ENCODE measurements at regions of chr2 and their contacts with region 1.

Region 1: DNA sequence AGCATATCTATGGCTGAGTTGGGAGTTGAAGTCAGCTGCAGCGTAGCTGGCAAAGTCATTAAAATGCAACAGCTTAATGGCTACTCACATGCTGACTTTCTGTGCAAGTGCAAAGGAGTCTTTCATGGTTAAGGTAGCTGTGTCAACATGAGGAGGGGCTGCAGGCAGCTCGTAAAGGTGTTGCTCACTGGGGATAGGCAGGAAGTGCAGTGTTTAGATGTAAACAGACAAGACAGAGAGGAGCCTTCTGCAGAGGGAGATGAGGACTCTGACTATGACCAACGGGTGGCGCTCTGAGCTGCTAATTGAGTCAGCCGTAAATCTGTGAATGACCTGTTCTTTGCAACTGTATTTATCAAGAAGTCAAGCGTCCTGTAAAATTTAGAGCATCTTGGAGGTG is 22.3 kb upstream of the CAVIN2 start:
- DNase-seq: peak; percentile 18 to 79 (median 40)
- ATAC-seq: peak; percentile 92
- H3K4me3 ChIP-seq: no peak overlapping the region
- H3K27ac ChIP-seq: 0 out of 3 replicates have a peak overlapping the region, but pooled peaks have one; percentile 3
- H3K4me1 ChIP-seq: peaks cover 5 to 28% of the 10 kb centered on the region in 2 experiments; a peak in 3 of 5 replicates
- H3K27me3 ChIP-seq: no peaks in the 10 kb centered on the region
- CTCF ChIP-seq: peak; percentile 64 to 73 (median 69)
- EP300 ChIP-seq: no peak
- POLR2A ChIP-seq: no peak
- RAD21 ChIP-seq: peak; percentile 80 to 84

Region 2: GRCh38 chr2:191811807-191812602 is 57.2 kb before region 1 on chr2:
- CTCF ChIA-PET with region 1: no interaction called
- POLR2A ChIA-PET with region 1: no interaction called
- in situ Hi-C with region 1: no loop called
- intact Hi-C with region 1: loop called (anchors 2 kb)
- DNase-seq: peak; percentile 31 to 70 (median 43)
- ATAC-seq: peak; percentile 94
- H3K4me3 ChIP-seq: no peak overlapping the region
- H3K27ac ChIP-seq: no peak overlapping the region
- H3K4me1 ChIP-seq: no peaks in the 10 kb centered on the region; a peak in 2 of 5 replicates
- H3K27me3 ChIP-seq: no peaks in the 10 kb centered on the region
- CTCF ChIP-seq: peak; percentile 65 to 82 (median 70)
- EP300 ChIP-seq: no peak
- POLR2A ChIP-seq: no peak
- RAD21 ChIP-seq: peak; percentile 89 to 92

Region 3: GRCh38 chr2:191824398-191824797 is 44.8 kb before region 1 on chr2:
- CTCF ChIA-PET with region 1: no interaction called
- POLR2A ChIA-PET with region 1: no interaction called
- in situ Hi-C with region 1: no loop called
- intact Hi-C with region 1: no loop called
- DNase-seq: no peak
- ATAC-seq: 0 out of 3 replicates have a peak, but pooled peaks have one; percentile 15
- H3K4me3 ChIP-seq: no peak overlapping the region
- H3K27ac ChIP-seq: no peak overlapping the region
- H3K4me1 ChIP-seq: no peaks in the 10 kb centered on the region; a peak in 1 of 5 replicates
- H3K27me3 ChIP-seq: no peaks in the 10 kb centered on the region
- CTCF ChIP-seq: no peak
- EP300 ChIP-seq: no peak
- POLR2A ChIP-seq: no peak
- RAD21 ChIP-seq: no peak

Region 4: GRCh38 chr2:191836853-191837769 is 32.1 kb before region 1 on chr2:
- CTCF ChIA-PET with region 1: no interaction called
- POLR2A ChIA-PET with region 1: no interaction called
- in situ Hi-C with region 1: no loop called
- intact Hi-C with region 1: loop called (anchors 2 kb)
- DNase-seq: peak; percentile 59 to 89 (median 67)
- ATAC-seq: peak; percentile 73
- H3K4me3 ChIP-seq: peak overlapping the region; percentile 50
- H3K27ac ChIP-seq: peak overlapping the region; percentile 95
- H3K4me1 ChIP-seq: peaks cover 8 to 49% of the 10 kb centered on the region in 2 experiments
- H3K27me3 ChIP-seq: no peaks in the 10 kb centered on the region
- CTCF ChIP-seq: no peak
- EP300 ChIP-seq: peak; percentile 98
- POLR2A ChIP-seq: 0 out of 2 replicates have a peak, but pooled peaks have one; percentile 38
- RAD21 ChIP-seq: no peak

Region 5: DNA sequence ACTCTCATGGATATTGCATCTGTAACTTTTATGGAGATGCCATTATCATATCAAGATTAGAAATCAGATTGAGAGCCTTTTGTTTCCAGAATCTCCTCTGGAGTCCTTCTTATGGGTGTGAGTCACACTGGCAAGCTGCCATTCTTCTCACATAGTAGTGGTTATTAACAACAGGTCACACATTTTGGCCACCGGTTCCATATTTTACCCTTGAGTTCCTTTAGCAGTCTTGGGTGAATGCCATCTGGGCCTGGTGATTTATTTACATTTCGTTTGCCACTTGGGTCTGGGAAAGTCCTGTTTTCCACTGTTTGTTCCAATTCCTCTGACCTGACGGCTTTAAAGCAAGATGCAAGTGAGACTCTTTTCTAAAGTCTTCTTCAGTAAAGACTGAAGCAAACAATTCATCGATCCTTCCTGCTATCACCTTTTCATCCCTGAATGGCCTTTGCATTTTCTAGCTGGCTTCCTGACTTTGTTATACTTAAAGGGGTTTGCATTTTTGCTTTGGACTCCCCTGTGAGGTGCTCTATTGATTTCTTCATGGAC is 58.2 kb after region 1 on chr2:
- CTCF ChIA-PET with region 1: no interaction called
- POLR2A ChIA-PET with region 1: no interaction called
- in situ Hi-C with region 1: no loop called
- intact Hi-C with region 1: no loop called
- DNase-seq: peak in 3 of 4 experiments; percentile 7 to 48 (median 16)
- ATAC-seq: no peak
- H3K4me3 ChIP-seq: no peak overlapping the region
- H3K27ac ChIP-seq: peak overlapping the region; percentile 17; the same call in 1 of the 3 replicates
- H3K4me1 ChIP-seq: peaks cover 0 to 24% of the 10 kb centered on the region in 2 experiments; a peak in 4 of 5 replicates
- H3K27me3 ChIP-seq: no peaks in the 10 kb centered on the region
- CTCF ChIP-seq: no peak
- EP300 ChIP-seq: no peak
- POLR2A ChIP-seq: no peak
- RAD21 ChIP-seq: no peak

Region 6: GRCh38 chr2:191946471-191947182 is 77.4 kb after region 1 on chr2:
- CTCF ChIA-PET with region 1: no interaction called
- POLR2A ChIA-PET with region 1: no interaction called
- in situ Hi-C with region 1: no loop called
- intact Hi-C with region 1: loop called (anchors 5 kb)
- DNase-seq: no peak
- ATAC-seq: no peak
- H3K4me3 ChIP-seq: no peak overlapping the region
- H3K27ac ChIP-seq: no peak overlapping the region
- H3K4me1 ChIP-seq: peaks cover 0 to 12% of the 10 kb centered on the region in 2 experiments; a peak in 3 of 5 replicates
- H3K27me3 ChIP-seq: no peaks in the 10 kb centered on the region
- CTCF ChIP-seq: no peak
- EP300 ChIP-seq: no peak
- POLR2A ChIP-seq: no peak
- RAD21 ChIP-seq: no peak

Region 7: GRCh38 chr2:192029089-192029488 is 159.9 kb after region 1 on chr2:
- CTCF ChIA-PET with region 1: no interaction called
- POLR2A ChIA-PET with region 1: no interaction called
- in situ Hi-C with region 1: no loop called
- intact Hi-C with region 1: loop called (anchors 10 kb)
- DNase-seq: peak; percentile 27 to 69 (median 54)
- ATAC-seq: peak; percentile 99
- H3K4me3 ChIP-seq: no peak overlapping the region
- H3K27ac ChIP-seq: no peak overlapping the region
- H3K4me1 ChIP-seq: no peaks in the 10 kb centered on the region; a peak in 1 of 5 replicates
- H3K27me3 ChIP-seq: no peaks in the 10 kb centered on the region
- CTCF ChIP-seq: peak; percentile 55 to 62 (median 57)
- EP300 ChIP-seq: no peak
- POLR2A ChIP-seq: no peak
- RAD21 ChIP-seq: peak; percentile 39 to 63

Region 8: GRCh38 chr2:192162392-192163042 is 293.3 kb after region 1 on chr2:
- CTCF ChIA-PET with region 1: interaction called, 6 read pairs
- POLR2A ChIA-PET with region 1: no interaction called
- in situ Hi-C with region 1: no loop called
- intact Hi-C with region 1: loop called (anchors 1 kb)
- DNase-seq: peak; percentile 26 to 78 (median 37)
- ATAC-seq: peak; percentile 93
- H3K4me3 ChIP-seq: no peak overlapping the region
- H3K27ac ChIP-seq: no peak overlapping the region
- H3K4me1 ChIP-seq: no peaks in the 10 kb centered on the region
- H3K27me3 ChIP-seq: no peaks in the 10 kb centered on the region
- CTCF ChIP-seq: peak; percentile 66 to 79 (median 67)
- EP300 ChIP-seq: no peak
- POLR2A ChIP-seq: no peak
- RAD21 ChIP-seq: peak; percentile 91 to 92

Region 9: DNA sequence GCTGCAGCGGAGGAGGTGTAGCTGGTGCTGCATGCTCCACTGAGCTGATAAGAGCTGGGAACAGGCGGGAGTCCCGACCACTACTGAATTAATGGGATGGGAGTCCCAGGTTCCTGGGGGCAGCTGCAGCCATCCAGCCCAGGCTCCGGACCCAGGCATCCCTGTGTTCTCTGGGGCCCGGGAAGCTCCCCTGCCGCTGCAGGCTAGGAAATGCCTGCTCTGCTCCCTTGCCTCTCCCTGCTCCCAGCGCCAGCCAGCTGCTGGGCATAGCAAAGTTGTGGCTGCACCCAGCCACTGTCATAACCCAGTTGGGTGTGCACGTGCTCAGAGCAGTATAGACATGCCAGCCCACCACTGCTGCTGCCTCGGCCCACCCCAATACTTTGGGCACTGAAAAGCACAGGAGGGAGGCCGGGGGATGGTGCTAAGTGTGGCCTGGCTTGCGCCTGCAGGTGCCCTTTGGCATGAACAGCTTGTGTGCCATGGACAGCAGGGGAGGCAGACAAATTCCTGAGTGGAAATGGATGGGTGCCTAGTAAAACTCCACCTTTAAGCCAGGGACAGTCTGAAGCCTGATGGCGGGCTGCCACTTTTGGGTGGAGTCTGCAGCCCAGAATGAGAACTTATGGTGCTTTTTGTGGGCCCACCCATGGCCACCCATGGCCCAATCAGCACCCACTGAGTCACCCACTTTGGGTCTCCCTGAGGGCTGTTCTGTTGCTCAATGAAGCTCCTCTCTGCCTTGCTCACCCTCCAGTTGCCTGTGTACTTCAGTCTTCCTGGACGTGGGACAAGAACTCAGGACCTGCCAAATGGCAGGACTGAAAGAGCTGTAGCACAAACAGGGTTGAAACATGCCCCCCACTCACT is 544.9 kb after region 1 on chr2:
- CTCF ChIA-PET with region 1: no interaction called
- POLR2A ChIA-PET with region 1: no interaction called
- in situ Hi-C with region 1: no loop called
- intact Hi-C with region 1: no loop called
- DNase-seq: no peak
- ATAC-seq: no peak
- H3K4me3 ChIP-seq: no peak overlapping the region
- H3K27ac ChIP-seq: no peak overlapping the region
- H3K4me1 ChIP-seq: no peaks in the 10 kb centered on the region
- H3K27me3 ChIP-seq: no peaks in the 10 kb centered on the region
- CTCF ChIP-seq: no peak
- EP300 ChIP-seq: no peak
- POLR2A ChIP-seq: no peak
- RAD21 ChIP-seq: no peak

Measured in K562 (cell line).